Head of caudate nucleus (tissue), 42 donors: ENCODE measurements at regions of chr19 and their contacts with region 1.

Region 1: GRCh38 chr19:54674021-54674617 is 11.3 kb downstream of the LILRB4 start:
- DNase-seq: peak in 1 of 42 donors; percentile 29

Region 2: GRCh38 chr19:54478677-54479266 is 195.3 kb before region 1 on chr19:
- intact Hi-C with region 1: loop called (anchors 10 kb)
- DNase-seq: peak in 13 of 42 donors; percentile 16 to 66 (median 34)